B cell (primary cell): ENCODE measurements at regions of chr17 and their contacts with region 1.

Region 1: DNA sequence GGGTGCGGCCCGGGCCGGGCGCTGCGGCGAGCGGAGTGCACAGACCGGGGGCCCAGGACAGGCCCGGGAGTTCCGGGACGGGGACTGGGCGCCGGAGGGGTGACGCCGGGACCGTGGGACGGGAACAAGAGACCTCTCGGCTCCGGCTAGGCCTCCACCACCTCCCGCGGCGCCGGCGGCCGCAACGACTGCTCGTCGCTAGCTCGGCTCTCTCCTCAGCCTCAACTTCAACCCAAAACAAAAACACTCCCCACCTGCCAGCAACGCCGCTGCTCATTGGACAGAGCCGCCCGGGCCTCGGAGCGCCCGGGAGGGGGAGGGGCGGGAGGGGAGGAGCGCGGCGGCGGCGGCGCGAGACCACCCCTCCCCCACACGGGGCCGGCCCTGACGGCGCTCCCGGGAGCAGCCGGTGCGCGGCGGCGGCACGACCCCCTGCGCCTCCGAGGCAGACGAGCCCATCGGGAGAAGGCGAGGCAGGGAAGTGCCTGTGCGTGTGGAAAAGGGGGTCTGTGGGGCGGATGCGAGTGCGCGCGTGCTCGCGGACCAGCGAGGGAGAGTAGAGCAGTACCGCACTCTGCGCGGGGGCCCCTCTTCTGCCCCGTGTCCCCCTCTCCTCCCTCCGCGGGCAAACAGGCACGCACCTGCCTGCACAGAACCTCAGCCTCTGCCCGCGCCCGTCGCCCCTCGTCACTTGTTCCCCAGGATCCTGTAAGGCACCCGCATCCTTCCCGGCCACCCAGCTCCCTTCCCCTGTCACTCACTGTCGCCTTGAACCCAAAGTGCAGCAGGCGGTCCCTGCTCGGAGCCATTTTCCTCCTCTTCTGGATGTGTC is at the start of gene FBXL20:
- DNase-seq: peak; percentile 95
- ATAC-seq: peak; percentile 76
- H3K4me3 ChIP-seq: peak within 1 kb of the TSS; percentile 63 to 90 (median 88)
- H3K4me3 Mint-ChIP-seq: peak within 1 kb of the TSS; percentile 91
- H3K27ac ChIP-seq: peak within 1 kb of the TSS; percentile 52 to 88
- H3K27ac Mint-ChIP-seq: peak within 1 kb of the TSS; percentile 96
- H3K4me1 ChIP-seq: peaks cover 14 to 15% of the 10 kb centered on the region in 2 donors
- H3K4me1 Mint-ChIP-seq: peaks cover 24% of the 10 kb centered on the region
- H3K27me3 ChIP-seq: no peaks in the 10 kb centered on the region
- H3K27me3 Mint-ChIP-seq: no peaks in the 10 kb centered on the region
- CTCF ChIP-seq: no peak
- total RNA-seq, gene FBXL20: 36.2 and 38.1 TPM in 2 replicates

Region 2: GRCh38 chr17:39110435-39111136 is 291.0 kb before region 1 on chr17:
- CTCF ChIA-PET with region 1: no interaction called
- POLR2A ChIA-PET with region 1: no interaction called
- intact Hi-C with region 1: no loop called
- DNase-seq: no peak
- ATAC-seq: no peak
- H3K4me3 ChIP-seq: no peak overlapping the region
- H3K4me3 Mint-ChIP-seq: no peak overlapping the region
- H3K27ac ChIP-seq: no peak overlapping the region
- H3K27ac Mint-ChIP-seq: no peak overlapping the region
- H3K4me1 ChIP-seq: no peaks in the 10 kb centered on the region
- H3K4me1 Mint-ChIP-seq: no peaks in the 10 kb centered on the region
- H3K27me3 ChIP-seq: peaks cover 0 to 2% (median 0%) of the 10 kb centered on the region in 4 experiments
- H3K27me3 Mint-ChIP-seq: peaks cover 14% of the 10 kb centered on the region
- CTCF ChIP-seq: no peak

Region 3: DNA sequence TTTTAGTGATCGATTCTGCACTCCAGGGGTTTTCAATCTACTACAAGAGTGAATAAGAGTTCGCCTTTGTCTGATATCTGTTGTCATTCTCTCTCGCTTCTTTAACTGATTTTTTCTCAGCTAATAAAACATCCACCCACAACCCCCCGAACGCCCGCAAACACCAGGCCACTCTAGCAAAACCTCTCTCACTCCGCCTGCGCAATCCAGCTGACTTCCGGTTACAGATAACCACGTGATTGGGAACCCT is 201.9 kb before region 1 on chr17:
- CTCF ChIA-PET with region 1: no interaction called
- POLR2A ChIA-PET with region 1: interaction called, 3 read pairs
- intact Hi-C with region 1: loop called (anchors 10 kb)
- DNase-seq: no peak
- ATAC-seq: peak; percentile 62
- H3K4me3 ChIP-seq: peak overlapping the region; percentile 78 to 100 (median 95)
- H3K4me3 Mint-ChIP-seq: peak overlapping the region; percentile 89
- H3K27ac ChIP-seq: peak overlapping the region; percentile 89 to 99
- H3K27ac Mint-ChIP-seq: peak overlapping the region; percentile 100
- H3K4me1 ChIP-seq: peaks cover 37 to 61% of the 10 kb centered on the region in 2 donors
- H3K4me1 Mint-ChIP-seq: peaks cover 57% of the 10 kb centered on the region
- H3K27me3 ChIP-seq: no peaks in the 10 kb centered on the region
- H3K27me3 Mint-ChIP-seq: no peaks in the 10 kb centered on the region
- CTCF ChIP-seq: no peak

Region 4: DNA sequence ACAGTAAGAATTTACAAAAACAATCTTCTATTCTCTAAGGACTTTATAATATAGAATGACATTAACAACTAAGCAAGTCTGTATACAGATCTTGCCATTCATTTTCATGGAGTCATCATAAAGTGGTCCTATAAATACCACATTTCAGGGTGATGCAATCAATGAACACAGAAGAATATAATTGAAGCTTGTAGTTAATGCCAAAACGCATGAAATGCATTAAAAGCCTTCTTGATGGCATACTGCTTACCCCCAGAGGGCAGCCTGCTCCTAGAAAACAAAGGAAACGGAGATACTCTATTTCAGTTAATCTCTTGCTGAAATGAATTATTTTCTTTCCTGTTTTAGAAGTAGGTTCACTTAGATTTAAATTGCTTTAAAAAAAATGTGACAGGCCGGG is 130.7 kb before region 1 on chr17:
- CTCF ChIA-PET with region 1: no interaction called
- POLR2A ChIA-PET with region 1: no interaction called
- intact Hi-C with region 1: loop called (anchors 10 kb)
- DNase-seq: peak; percentile 13
- ATAC-seq: no peak
- H3K4me3 ChIP-seq: no peak overlapping the region
- H3K4me3 Mint-ChIP-seq: no peak overlapping the region
- H3K27ac ChIP-seq: no peak overlapping the region
- H3K27ac Mint-ChIP-seq: no peak overlapping the region
- H3K4me1 ChIP-seq: no peaks in the 10 kb centered on the region
- H3K4me1 Mint-ChIP-seq: no peaks in the 10 kb centered on the region
- H3K27me3 ChIP-seq: no peaks in the 10 kb centered on the region
- H3K27me3 Mint-ChIP-seq: no peaks in the 10 kb centered on the region
- CTCF ChIP-seq: peak; percentile 21

Region 5: DNA sequence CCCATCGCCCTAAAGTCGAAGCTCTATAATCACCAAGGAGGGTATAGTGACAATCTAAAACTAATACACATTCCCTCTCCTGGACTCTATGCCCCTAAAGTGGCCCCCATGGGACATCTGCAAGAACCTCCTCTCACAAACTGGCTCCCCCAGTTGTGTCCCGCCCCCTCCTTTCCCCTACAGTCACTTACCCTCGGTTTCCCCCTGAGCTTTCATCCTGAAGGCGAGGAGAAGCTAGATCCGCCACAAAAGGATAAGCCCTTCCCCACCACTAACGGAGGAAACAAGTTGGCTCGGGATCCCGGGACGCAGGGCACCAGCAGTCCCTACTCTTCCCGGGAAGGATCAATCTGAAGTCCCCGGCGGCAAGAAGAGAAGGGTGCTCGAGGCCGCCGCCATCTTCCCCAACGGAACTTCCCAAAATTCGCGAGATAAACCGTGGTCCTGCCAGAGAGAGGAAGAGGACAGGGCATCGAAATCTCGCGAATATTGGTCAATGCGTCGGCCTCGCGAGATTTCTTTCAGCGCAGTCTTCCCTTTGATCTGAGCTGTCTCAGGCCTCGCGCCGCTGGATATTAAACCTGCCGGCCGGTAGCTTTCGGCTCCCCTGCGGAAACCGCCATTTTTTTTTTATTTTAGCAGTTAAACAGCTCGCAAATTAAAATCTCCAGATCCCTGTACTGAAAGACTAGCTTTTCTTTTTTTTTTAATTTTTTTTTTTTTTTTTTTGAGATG is 49.4 kb after region 1 on chr17 and contains the start of gene MED1:
- CTCF ChIA-PET with region 1: interaction called, 4 read pairs
- POLR2A ChIA-PET with region 1: interaction called, 3 read pairs
- intact Hi-C with region 1: loop called (anchors 2 kb)
- DNase-seq: peak; percentile 97
- ATAC-seq: peak; percentile 98
- H3K4me3 ChIP-seq: peak within 1 kb of the TSS; percentile 82 to 95 (median 87)
- H3K4me3 Mint-ChIP-seq: peak within 1 kb of the TSS; percentile 92
- H3K27ac ChIP-seq: peak within 1 kb of the TSS; percentile 81 to 82
- H3K27ac Mint-ChIP-seq: peak within 1 kb of the TSS; percentile 97
- H3K4me1 ChIP-seq: peaks cover 13 to 17% of the 10 kb centered on the region in 2 donors
- H3K4me1 Mint-ChIP-seq: peaks cover 22% of the 10 kb centered on the region
- H3K27me3 ChIP-seq: no peaks in the 10 kb centered on the region
- H3K27me3 Mint-ChIP-seq: no peaks in the 10 kb centered on the region
- CTCF ChIP-seq: no peak
- total RNA-seq, gene MED1: 56.9 and 59.1 TPM in 2 replicates

Region 6: DNA sequence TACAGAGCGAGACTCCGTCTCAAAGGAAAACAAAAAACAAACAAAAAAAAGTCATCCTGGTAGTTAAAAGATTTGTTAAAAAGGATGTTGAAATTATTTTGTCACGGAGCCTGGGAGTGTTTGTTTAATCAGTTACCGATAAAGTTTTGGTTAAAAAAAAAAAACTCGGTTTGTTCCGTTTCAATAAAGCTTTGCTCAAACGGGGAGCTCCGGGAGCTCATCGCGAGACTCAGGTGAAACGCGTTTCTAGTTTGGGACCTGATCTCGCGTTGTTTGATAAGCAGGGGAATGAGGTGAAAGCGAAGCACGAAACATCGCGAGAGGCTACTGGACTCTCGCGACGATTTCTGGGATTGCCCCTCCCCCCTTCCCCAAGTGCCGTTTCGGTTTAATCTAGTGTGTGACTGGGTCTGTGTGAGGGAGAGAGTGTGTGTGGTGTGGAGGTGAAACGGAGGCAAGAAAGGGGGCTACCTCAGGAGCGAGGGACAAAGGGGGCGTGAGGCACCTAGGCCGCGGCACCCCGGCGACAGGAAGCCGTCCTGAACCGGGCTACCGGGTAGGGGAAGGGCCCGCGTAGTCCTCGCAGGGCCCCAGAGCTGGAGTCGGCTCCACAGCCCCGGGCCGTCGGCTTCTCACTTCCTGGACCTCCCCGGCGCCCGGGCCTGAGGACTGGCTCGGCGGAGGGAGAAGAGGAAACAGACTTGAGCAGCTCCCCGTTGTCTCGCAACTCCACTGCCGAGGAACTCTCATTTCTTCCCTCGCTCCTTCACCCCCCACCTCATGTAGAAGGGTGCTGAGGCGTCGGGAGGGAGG is 59.7 kb after region 1 on chr17 and contains the start of gene CDK12:
- CTCF ChIA-PET with region 1: no interaction called
- POLR2A ChIA-PET with region 1: no interaction called
- intact Hi-C with region 1: loop called (anchors 1 kb)
- DNase-seq: peak; percentile 99
- ATAC-seq: peak; percentile 88
- H3K4me3 ChIP-seq: peak within 1 kb of the TSS; percentile 82 to 98 (median 86)
- H3K4me3 Mint-ChIP-seq: peak within 1 kb of the TSS; percentile 93
- H3K27ac ChIP-seq: peak within 1 kb of the TSS; percentile 94 to 97
- H3K27ac Mint-ChIP-seq: peak within 1 kb of the TSS; percentile 96
- H3K4me1 ChIP-seq: peaks cover 20 to 32% of the 10 kb centered on the region in 2 donors
- H3K4me1 Mint-ChIP-seq: peaks cover 39% of the 10 kb centered on the region
- H3K27me3 ChIP-seq: no peaks in the 10 kb centered on the region
- H3K27me3 Mint-ChIP-seq: no peaks in the 10 kb centered on the region
- CTCF ChIP-seq: no peak
- total RNA-seq, gene CDK12: 117 and 134 TPM in 2 replicates

Region 7: DNA sequence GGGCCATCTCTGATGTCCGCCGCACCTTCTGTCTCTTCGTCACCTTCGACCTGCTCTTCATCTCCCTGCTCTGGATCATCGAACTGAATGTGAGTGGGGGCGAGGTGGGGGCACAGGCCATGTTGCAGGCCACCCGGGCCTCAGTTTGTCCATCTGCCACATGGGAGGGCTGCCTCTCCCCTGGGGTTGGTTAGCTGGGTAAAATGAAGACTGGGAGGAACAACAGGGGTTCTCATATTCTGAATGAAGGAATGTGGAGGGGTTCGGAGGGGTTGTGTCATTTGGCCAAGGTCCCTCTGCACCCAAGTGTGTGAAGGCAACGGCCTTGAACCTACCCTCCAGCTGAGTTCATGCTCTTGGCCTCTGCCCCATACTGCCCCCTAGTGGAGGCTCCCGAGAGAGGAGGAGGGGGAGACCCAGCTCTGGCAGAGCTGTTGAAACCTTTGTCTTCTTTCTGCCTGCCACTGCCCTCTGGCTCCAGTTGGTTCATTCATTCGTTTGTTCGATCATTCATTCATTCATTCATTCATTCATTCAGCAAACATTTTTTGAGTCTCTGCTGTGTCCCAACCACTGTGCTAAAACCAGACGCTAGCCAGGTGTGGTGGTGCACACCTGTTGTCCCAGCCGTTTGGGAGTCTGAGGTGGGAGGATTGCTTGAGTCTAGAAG is 252.2 kb after region 1 on chr17:
- CTCF ChIA-PET with region 1: no interaction called
- POLR2A ChIA-PET with region 1: no interaction called
- intact Hi-C with region 1: no loop called
- DNase-seq: peak; percentile 71
- ATAC-seq: peak; percentile 71
- H3K4me3 ChIP-seq: no peak overlapping the region
- H3K4me3 Mint-ChIP-seq: no peak overlapping the region
- H3K27ac ChIP-seq: no peak overlapping the region
- H3K27ac Mint-ChIP-seq: no peak overlapping the region
- H3K4me1 ChIP-seq: peaks cover 8 to 16% of the 10 kb centered on the region in 2 donors
- H3K4me1 Mint-ChIP-seq: peaks cover 36% of the 10 kb centered on the region
- H3K27me3 ChIP-seq: no peaks in the 10 kb centered on the region
- H3K27me3 Mint-ChIP-seq: no peaks in the 10 kb centered on the region
- CTCF ChIP-seq: peak; percentile 80